A549 (cell line): ENCODE measurements at regions of chr7 and their contacts with region 1.

Region 1: GRCh38 chr7:51366930-51367613 is 50.5 kb upstream of the COBL start:
- DNase-seq: peak; percentile 57 to 84
- ATAC-seq: peak; percentile 93 to 97
- H3K4me3 ChIP-seq: no peak overlapping the region
- H3K27ac ChIP-seq: no peak overlapping the region
- H3K4me1 ChIP-seq: no peaks in the 10 kb centered on the region
- CTCF ChIP-seq: peak; percentile 58
- EP300 ChIP-seq: no peak
- POLR2A ChIP-seq: no peak
- RAD21 ChIP-seq: peak; percentile 76

Region 2: DNA sequence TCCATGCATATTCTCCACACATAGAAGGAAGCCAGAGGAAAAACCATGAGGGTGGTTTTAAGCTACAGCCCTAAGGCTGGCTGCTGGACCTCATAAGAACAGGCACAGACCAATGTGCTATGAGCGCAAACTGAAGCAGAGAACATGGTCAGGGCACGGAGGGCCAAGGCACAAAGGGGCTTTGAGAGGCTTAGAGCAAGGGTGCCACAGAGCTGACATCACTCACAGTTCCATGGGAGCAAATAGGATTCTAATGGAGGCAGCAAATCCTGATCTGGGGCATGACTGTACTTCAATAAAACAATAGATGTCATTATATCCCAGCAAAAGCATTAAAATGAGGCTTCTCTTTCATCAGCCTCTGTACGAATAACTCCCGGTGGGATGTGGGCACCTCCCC is 212.9 kb before region 1 on chr7:
- CTCF ChIA-PET with region 1: interaction called, 11 read pairs
- POLR2A ChIA-PET with region 1: no interaction called
- DNase-seq: no peak
- ATAC-seq: no peak
- H3K4me3 ChIP-seq: no peak overlapping the region
- H3K27ac ChIP-seq: no peak overlapping the region
- H3K4me1 ChIP-seq: no peaks in the 10 kb centered on the region
- CTCF ChIP-seq: no peak
- EP300 ChIP-seq: no peak
- POLR2A ChIP-seq: no peak
- RAD21 ChIP-seq: no peak

Region 3: GRCh38 chr7:51224811-51225612 is 142.1 kb before region 1 on chr7:
- CTCF ChIA-PET with region 1: interaction called, 43 read pairs
- POLR2A ChIA-PET with region 1: no interaction called
- DNase-seq: peak; percentile 48
- ATAC-seq: peak; percentile 88 to 89
- H3K4me3 ChIP-seq: no peak overlapping the region
- H3K27ac ChIP-seq: no peak overlapping the region
- H3K4me1 ChIP-seq: peaks cover 8% of the 10 kb centered on the region; the same call in 1 of the 3 replicates
- CTCF ChIP-seq: peak; percentile 39; the same call in 2 of the 3 replicates
- EP300 ChIP-seq: no peak
- POLR2A ChIP-seq: no peak
- RAD21 ChIP-seq: peak; percentile 48 to 55

Region 4: DNA sequence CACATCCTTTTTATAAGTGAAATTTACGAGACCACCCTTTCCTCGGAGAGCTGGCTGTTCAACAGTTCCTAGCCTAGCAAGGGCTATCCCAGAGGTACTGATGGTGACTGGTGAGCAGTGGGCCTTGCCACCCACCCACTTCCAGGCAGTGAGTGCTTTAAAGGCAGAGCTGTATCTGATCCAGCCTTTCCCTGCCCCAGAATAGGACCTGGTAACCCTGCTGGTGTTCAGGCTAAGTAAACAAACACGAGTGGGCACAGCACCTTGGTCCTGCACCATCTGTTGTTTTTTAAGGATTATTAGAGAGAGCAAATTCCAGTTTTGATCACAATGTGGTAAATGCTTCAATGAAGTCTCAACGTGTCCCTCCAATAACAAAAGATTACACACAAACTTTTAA is 126.2 kb before region 1 on chr7:
- CTCF ChIA-PET with region 1: interaction called, 12 read pairs
- POLR2A ChIA-PET with region 1: no interaction called
- DNase-seq: no peak
- ATAC-seq: no peak
- H3K4me3 ChIP-seq: no peak overlapping the region
- H3K27ac ChIP-seq: no peak overlapping the region
- H3K4me1 ChIP-seq: no peaks in the 10 kb centered on the region
- CTCF ChIP-seq: no peak
- EP300 ChIP-seq: no peak
- POLR2A ChIP-seq: no peak
- RAD21 ChIP-seq: no peak

Region 5: GRCh38 chr7:51352174-51353100 is 14.6 kb before region 1 on chr7:
- CTCF ChIA-PET with region 1: interaction called, 43 read pairs
- POLR2A ChIA-PET with region 1: no interaction called
- DNase-seq: no peak
- ATAC-seq: peak; percentile 38 to 52; a peak in 2 of 6 replicates
- H3K4me3 ChIP-seq: no peak overlapping the region
- H3K27ac ChIP-seq: no peak overlapping the region
- H3K4me1 ChIP-seq: peaks cover 8% of the 10 kb centered on the region; the same call in 2 of the 3 replicates
- CTCF ChIP-seq: no peak
- EP300 ChIP-seq: no peak
- POLR2A ChIP-seq: no peak
- RAD21 ChIP-seq: no peak

Region 6: GRCh38 chr7:51543801-51544553 is 176.9 kb after region 1 on chr7:
- CTCF ChIA-PET with region 1: no interaction called
- POLR2A ChIA-PET with region 1: no interaction called
- DNase-seq: no peak
- ATAC-seq: no peak
- H3K4me3 ChIP-seq: no peak overlapping the region
- H3K27ac ChIP-seq: no peak overlapping the region
- H3K4me1 ChIP-seq: no peaks in the 10 kb centered on the region
- CTCF ChIP-seq: no peak
- EP300 ChIP-seq: no peak
- POLR2A ChIP-seq: no peak
- RAD21 ChIP-seq: no peak